CD4-positive, alpha-beta memory T cell (primary cell): ENCODE measurements at regions of chr9 and their contacts with region 1.

Region 1: GRCh38 chr9:27529316-27530278 is at the start of gene MOB3B:
- DNase-seq: peak; percentile 65 to 70 (median 67)
- H3K4me3 ChIP-seq: peak within 1 kb of the TSS; percentile 37 to 68
- H3K4me3 Mint-ChIP-seq: peak within 1 kb of the TSS; percentile 88 to 98 (median 92)
- H3K27ac ChIP-seq: peak within 1 kb of the TSS; percentile 34
- H3K27ac Mint-ChIP-seq: peak within 1 kb of the TSS in 5 of 7 donors; percentile 43 to 89 (median 71)
- H3K4me1 ChIP-seq: peaks cover 3% of the 10 kb centered on the region
- H3K4me1 Mint-ChIP-seq: peaks cover 3 to 8% (median 5%) of the 10 kb centered on the region in 4 donors
- H3K27me3 ChIP-seq: peaks cover 5% of the 10 kb centered on the region
- H3K27me3 Mint-ChIP-seq: peaks cover 0 to 4% of the 10 kb centered on the region in 2 donors
- total RNA-seq, gene MOB3B: 0.53 to 0.64 TPM

Region 2: GRCh38 chr9:27154908-27155307 is 374.7 kb before region 1 on chr9:
- CTCF ChIA-PET with region 1: no interaction called
- POLR2A ChIA-PET with region 1: no interaction called
- intact Hi-C with region 1: no loop called
- DNase-seq: no peak
- H3K4me3 ChIP-seq: no peak overlapping the region
- H3K4me3 Mint-ChIP-seq: peak overlapping the region in 1 of 8 donors; percentile 9
- H3K27ac ChIP-seq: no peak overlapping the region
- H3K27ac Mint-ChIP-seq: no peak overlapping the region
- H3K4me1 ChIP-seq: no peaks in the 10 kb centered on the region
- H3K4me1 Mint-ChIP-seq: no peaks in the 10 kb centered on the region
- H3K27me3 ChIP-seq: no peaks in the 10 kb centered on the region
- H3K27me3 Mint-ChIP-seq: no peaks in the 10 kb centered on the region

Region 3: GRCh38 chr9:27333241-27334052 is 196.2 kb before region 1 on chr9:
- CTCF ChIA-PET with region 1: interaction called, 55 read pairs
- POLR2A ChIA-PET with region 1: no interaction called
- intact Hi-C with region 1: loop called (anchors 1 kb)
- DNase-seq: peak in 4 of 5 donors; percentile 47 to 59 (median 58)
- H3K4me3 ChIP-seq: no peak overlapping the region
- H3K4me3 Mint-ChIP-seq: no peak overlapping the region
- H3K27ac ChIP-seq: no peak overlapping the region
- H3K27ac Mint-ChIP-seq: no peak overlapping the region
- H3K4me1 ChIP-seq: no peaks in the 10 kb centered on the region
- H3K4me1 Mint-ChIP-seq: no peaks in the 10 kb centered on the region
- H3K27me3 ChIP-seq: no peaks in the 10 kb centered on the region
- H3K27me3 Mint-ChIP-seq: peaks cover 2 to 5% of the 10 kb centered on the region in 2 donors

Region 4: DNA sequence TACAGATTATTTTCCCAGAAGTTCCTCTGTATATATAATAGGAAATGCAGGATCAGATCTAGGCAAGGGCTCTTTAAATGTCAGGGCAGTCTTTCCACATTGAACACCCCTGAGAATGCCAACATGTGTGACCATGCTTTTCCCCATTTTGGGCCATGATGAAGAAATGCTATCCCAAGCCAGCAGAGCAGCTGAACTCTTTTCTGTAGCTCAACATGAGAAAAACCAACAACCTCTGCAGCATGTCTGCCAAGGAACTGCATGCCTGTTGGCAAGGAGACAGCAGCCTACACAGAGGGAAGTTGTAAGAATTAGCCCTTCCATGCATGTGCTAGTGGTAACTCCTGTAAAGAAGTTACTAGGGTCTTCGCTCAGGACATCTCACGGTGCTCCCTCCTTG is 15.0 kb before region 1 on chr9:
- CTCF ChIA-PET with region 1: interaction called, 11 read pairs
- POLR2A ChIA-PET with region 1: no interaction called
- intact Hi-C with region 1: no loop called
- DNase-seq: no peak
- H3K4me3 ChIP-seq: no peak overlapping the region
- H3K4me3 Mint-ChIP-seq: no peak overlapping the region
- H3K27ac ChIP-seq: no peak overlapping the region
- H3K27ac Mint-ChIP-seq: no peak overlapping the region
- H3K4me1 ChIP-seq: no peaks in the 10 kb centered on the region
- H3K4me1 Mint-ChIP-seq: no peaks in the 10 kb centered on the region
- H3K27me3 ChIP-seq: no peaks in the 10 kb centered on the region
- H3K27me3 Mint-ChIP-seq: peaks cover 0 to 1% of the 10 kb centered on the region in 2 donors

Region 5: DNA sequence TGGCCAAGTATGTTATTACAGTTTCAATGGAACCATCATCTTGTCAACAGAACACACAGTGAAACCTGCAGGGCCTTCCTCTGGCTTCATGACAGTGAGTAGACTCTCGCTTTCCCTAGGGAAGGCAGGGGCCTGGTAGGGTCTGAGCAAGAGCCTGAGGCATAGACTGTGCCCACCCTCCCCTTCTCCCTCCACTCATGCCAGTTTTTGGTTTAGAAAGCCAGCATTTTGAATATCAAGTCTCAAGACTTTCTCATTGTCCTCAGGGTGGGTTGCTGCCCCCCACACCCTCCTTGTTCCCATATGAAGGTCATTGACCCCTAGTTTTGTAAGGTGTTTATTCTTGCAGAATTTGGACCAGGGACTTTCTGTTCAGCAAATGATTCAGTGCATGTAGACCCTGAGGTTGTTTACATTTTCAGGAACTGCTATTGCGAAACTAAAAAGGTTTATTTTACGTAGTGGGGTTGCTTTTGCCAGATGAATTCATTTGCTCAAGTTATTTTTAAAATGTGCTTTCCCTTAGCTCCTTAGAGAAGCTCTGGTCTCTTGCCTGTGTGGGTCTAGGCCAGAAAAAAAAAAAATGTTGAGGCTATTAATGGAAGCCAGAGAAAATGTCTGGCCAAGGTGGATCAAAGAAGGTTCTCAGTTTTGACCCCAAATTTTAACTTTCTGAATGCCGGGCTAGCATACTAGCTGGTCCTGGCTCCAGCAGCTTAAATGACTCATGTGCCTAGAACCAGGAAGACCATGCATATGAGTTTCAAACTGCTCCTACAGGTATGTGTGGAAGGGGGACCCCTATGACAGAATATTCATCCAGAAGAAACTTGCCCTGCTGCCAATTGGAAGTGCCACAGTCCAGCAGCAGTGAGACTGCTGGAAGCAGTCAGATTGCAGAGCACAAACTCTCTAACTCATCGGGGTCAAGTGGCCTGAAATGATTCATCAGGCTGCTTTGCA is 10.2 kb after region 1 on chr9:
- CTCF ChIA-PET with region 1: interaction called, 22 read pairs
- POLR2A ChIA-PET with region 1: no interaction called
- intact Hi-C with region 1: no loop called
- DNase-seq: no peak
- H3K4me3 ChIP-seq: no peak overlapping the region
- H3K4me3 Mint-ChIP-seq: no peak overlapping the region
- H3K27ac ChIP-seq: no peak overlapping the region
- H3K27ac Mint-ChIP-seq: no peak overlapping the region
- H3K4me1 ChIP-seq: no peaks in the 10 kb centered on the region
- H3K4me1 Mint-ChIP-seq: no peaks in the 10 kb centered on the region
- H3K27me3 ChIP-seq: no peaks in the 10 kb centered on the region
- H3K27me3 Mint-ChIP-seq: no peaks in the 10 kb centered on the region

Region 6: DNA sequence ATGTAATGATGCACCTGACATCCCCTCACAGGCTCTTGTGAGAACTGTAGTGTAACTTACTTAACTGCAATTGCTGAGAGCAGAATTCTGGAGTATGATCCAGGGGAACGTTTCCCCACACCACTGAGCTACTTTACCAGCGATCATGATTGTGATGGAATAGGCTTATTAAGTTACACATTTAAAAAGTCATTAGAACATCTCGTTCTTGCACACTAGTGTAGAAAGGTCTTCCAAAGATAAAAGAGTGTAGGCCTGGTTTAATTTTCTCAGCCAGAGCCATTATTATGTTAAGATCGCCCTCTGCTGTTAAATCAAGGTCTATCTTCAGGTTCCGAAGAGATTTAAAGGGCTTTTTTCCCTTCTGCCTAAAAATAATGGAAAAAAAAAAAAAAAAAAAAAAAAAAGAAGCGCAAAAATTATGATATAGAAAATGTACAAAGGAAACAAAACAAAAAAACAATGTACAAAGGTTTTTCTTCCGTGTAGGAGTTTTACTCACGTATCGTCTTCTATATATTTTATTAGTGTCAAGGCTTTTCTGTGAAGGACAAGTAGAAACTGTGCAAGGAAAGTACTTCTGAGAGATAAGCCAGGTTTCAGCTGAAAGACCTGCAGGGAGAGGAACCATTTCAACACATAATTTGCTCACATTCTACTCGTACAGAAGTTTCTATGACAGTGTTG is 18.6 kb after region 1 on chr9:
- CTCF ChIA-PET with region 1: interaction called, 19 read pairs
- POLR2A ChIA-PET with region 1: no interaction called
- intact Hi-C with region 1: no loop called
- DNase-seq: no peak
- H3K4me3 ChIP-seq: no peak overlapping the region
- H3K4me3 Mint-ChIP-seq: no peak overlapping the region
- H3K27ac ChIP-seq: no peak overlapping the region
- H3K27ac Mint-ChIP-seq: no peak overlapping the region
- H3K4me1 ChIP-seq: no peaks in the 10 kb centered on the region
- H3K4me1 Mint-ChIP-seq: peaks cover 0 to 1% (median under 1%) of the 10 kb centered on the region in 4 donors
- H3K27me3 ChIP-seq: no peaks in the 10 kb centered on the region
- H3K27me3 Mint-ChIP-seq: no peaks in the 10 kb centered on the region

Region 7: GRCh38 chr9:27573634-27574590 is 44.3 kb after region 1 on chr9:
- CTCF ChIA-PET with region 1: interaction called, 5 read pairs
- POLR2A ChIA-PET with region 1: interaction called, 8 read pairs
- intact Hi-C with region 1: loop called (anchors 1 kb)
- DNase-seq: peak; percentile 96 to 99 (median 98)
- H3K4me3 ChIP-seq: peak overlapping the region; percentile 49 to 78
- H3K4me3 Mint-ChIP-seq: peak overlapping the region; percentile 94 to 99 (median 98)
- H3K27ac ChIP-seq: peak overlapping the region; percentile 94
- H3K27ac Mint-ChIP-seq: peak overlapping the region; percentile 98 to 100 (median 99)
- H3K4me1 ChIP-seq: peaks cover 14% of the 10 kb centered on the region
- H3K4me1 Mint-ChIP-seq: peaks cover 15 to 37% (median 22%) of the 10 kb centered on the region in 4 donors
- H3K27me3 ChIP-seq: no peaks in the 10 kb centered on the region
- H3K27me3 Mint-ChIP-seq: peaks cover 0 to 5% of the 10 kb centered on the region in 2 donors

Region 8: GRCh38 chr9:28032207-28032590 is 502.6 kb after region 1 on chr9:
- CTCF ChIA-PET with region 1: no interaction called
- POLR2A ChIA-PET with region 1: no interaction called
- intact Hi-C with region 1: no loop called
- DNase-seq: no peak
- H3K4me3 ChIP-seq: no peak overlapping the region
- H3K4me3 Mint-ChIP-seq: no peak overlapping the region
- H3K27ac ChIP-seq: no peak overlapping the region
- H3K27ac Mint-ChIP-seq: no peak overlapping the region
- H3K4me1 ChIP-seq: no peaks in the 10 kb centered on the region
- H3K4me1 Mint-ChIP-seq: no peaks in the 10 kb centered on the region
- H3K27me3 ChIP-seq: no peaks in the 10 kb centered on the region
- H3K27me3 Mint-ChIP-seq: no peaks in the 10 kb centered on the region